Heart right ventricle (tissue), 16 donors: ENCODE measurements at regions of chr16 and their contacts with region 1.

Region 1: GRCh38 chr16:28082624-28083023 is 19.1 kb upstream of the GSG1L start:
- DNase-seq: no peak
- ATAC-seq: no peak
- H3K4me3 ChIP-seq: no peak overlapping the region
- H3K27ac ChIP-seq: no peak overlapping the region
- H3K4me1 ChIP-seq: no peaks in the 10 kb centered on the region
- H3K27me3 ChIP-seq: peaks cover 0 to 4% (median 0%) of the 10 kb centered on the region in 7 donors
- CTCF ChIP-seq: no peak

Region 2: GRCh38 chr16:28011971-28012445 is 70.6 kb before region 1 on chr16:
- intact Hi-C with region 1: no loop called
- DNase-seq: no peak
- ATAC-seq: peak in 1 of 8 donors; percentile 25
- H3K4me3 ChIP-seq: no peak overlapping the region
- H3K27ac ChIP-seq: peak overlapping the region in 1 of 10 donors; percentile 35
- H3K4me1 ChIP-seq: peaks cover 0 to 9% (median 0%) of the 10 kb centered on the region in 9 donors
- H3K27me3 ChIP-seq: peaks cover 0 to 57% (median 0%) of the 10 kb centered on the region in 7 donors
- CTCF ChIP-seq: no peak

Region 3: GRCh38 chr16:28025631-28026030 is 57.0 kb before region 1 on chr16:
- intact Hi-C with region 1: loop called in 1 of 10 experiments (anchors 10 kb)
- DNase-seq: no peak
- ATAC-seq: no peak
- H3K4me3 ChIP-seq: no peak overlapping the region
- H3K27ac ChIP-seq: no peak overlapping the region
- H3K4me1 ChIP-seq: no peaks in the 10 kb centered on the region
- H3K27me3 ChIP-seq: no peaks in the 10 kb centered on the region
- CTCF ChIP-seq: no peak

Region 4: DNA sequence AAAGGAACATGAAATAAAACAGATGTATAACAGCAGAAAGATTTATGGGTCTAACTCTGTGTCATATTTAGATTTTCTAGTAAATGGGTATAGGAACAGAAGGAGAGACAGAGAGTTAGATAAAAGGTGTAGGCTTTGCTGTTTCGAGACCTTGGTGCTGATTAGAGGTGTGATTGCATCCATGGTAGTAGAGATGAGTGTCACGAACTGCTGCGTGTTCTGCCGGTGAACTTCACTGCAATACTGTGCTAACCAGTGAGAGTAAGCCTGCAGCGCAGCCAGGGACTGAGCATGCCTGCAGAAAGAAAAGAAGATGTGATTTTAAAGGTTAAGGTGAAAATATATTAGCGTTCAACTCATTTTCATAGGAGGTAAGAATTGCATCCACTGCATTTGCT is 34.5 kb after region 1 on chr16:
- intact Hi-C with region 1: no loop called
- DNase-seq: no peak
- ATAC-seq: no peak
- H3K4me3 ChIP-seq: no peak overlapping the region
- H3K27ac ChIP-seq: no peak overlapping the region
- H3K4me1 ChIP-seq: no peaks in the 10 kb centered on the region
- H3K27me3 ChIP-seq: no peaks in the 10 kb centered on the region
- CTCF ChIP-seq: no peak

Region 5: GRCh38 chr16:28140788-28141618 is 58.4 kb after region 1 on chr16:
- intact Hi-C with region 1: no loop called
- DNase-seq: peak in 1 of 2 donors; percentile 13
- ATAC-seq: peak in 7 of 8 donors; percentile 34 to 65 (median 50)
- H3K4me3 ChIP-seq: peak overlapping the region in 1 of 10 donors; percentile 28
- H3K27ac ChIP-seq: peak overlapping the region in 4 of 10 donors; percentile 26 to 93 (median 48)
- H3K4me1 ChIP-seq: peaks cover 0 to 84% (median 0%) of the 10 kb centered on the region in 9 donors
- H3K27me3 ChIP-seq: no peaks in the 10 kb centered on the region
- CTCF ChIP-seq: peak in 1 of 9 donors; percentile 18